Sciatic nerve (tissue), 2 donors: ENCODE measurements at regions of chr5 and their contacts with region 1.

Region 1: GRCh38 chr5:149228618-149229297 is 42.9 kb upstream of the AFAP1L1 start:
- DNase-seq: no peak
- ATAC-seq: peak; percentile 97

Region 2: DNA sequence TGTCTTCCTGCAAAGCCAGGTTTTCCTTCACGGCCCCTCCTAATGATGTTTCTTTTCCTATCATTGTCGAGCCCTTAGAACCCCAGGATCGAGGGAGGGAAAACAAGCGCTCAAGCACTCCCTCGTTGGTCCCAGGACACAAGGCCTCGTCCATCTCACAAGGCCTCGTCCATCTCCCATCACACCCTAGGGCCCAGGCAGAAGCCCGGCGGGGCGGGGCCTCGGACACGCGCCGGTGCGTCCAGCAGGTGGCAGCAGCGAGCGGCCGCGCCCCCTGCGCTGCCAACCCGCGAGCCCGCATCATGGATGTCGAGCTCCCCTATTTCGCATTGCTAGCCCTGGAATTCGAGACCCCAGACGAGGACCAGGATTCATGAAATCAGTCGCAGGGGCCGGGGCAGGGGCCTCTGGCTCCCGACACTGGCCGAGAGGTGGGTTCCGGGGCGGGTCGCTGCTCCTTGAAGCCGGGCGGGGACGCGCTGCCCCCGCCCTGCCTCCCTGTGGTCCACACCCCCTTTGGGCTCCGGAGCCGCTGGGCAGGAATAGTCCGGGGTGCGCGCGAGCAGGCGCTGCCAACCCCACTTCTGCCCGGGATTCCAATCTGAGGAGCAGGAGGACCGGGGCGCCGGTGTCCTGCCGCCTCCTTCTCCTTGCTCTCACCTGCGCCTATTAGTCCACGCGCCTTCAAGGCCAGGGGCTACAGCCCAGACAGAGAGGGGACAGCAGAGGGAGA is 87.4 kb before region 1 on chr5 and contains the start of gene ABLIM3:
- intact Hi-C with region 1: loop called (anchors 5 kb)
- DNase-seq: peak; percentile 81
- ATAC-seq: peak; percentile 89
- total RNA-seq, gene ABLIM3: 67.6 TPM

Region 3: DNA sequence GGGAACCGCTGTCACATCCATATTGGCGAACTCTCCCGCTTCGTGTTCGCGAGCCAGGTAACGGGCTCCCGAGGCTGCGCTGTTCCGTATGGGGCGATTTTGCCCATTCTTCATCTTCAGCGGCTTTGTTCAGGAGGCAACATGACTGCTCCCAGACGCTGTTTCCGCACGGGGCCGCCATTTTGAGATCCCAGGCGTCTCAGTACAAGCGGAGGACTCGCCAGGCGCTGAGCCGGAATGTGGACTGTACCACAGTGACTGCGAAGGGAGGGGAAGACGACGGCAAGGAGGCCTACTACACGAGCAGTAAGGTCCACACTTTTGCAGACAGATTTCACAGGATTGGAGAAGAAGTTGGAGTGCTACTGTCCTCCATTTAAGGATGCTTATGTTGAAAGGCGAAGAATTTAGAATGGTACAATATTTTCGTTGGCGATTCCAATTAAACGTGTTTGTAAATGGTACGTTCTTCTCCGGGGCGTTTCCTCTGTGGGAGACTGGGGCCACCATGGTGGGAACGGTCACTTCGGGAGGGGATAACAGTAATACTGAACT is 1717.7 kb after region 1 on chr5:
- intact Hi-C with region 1: no loop called
- DNase-seq: peak; percentile 90
- ATAC-seq: peak; percentile 99